CD4-positive, alpha-beta T cell (primary cell): ENCODE measurements at regions of chr5 and their contacts with region 1.

Region 1: DNA sequence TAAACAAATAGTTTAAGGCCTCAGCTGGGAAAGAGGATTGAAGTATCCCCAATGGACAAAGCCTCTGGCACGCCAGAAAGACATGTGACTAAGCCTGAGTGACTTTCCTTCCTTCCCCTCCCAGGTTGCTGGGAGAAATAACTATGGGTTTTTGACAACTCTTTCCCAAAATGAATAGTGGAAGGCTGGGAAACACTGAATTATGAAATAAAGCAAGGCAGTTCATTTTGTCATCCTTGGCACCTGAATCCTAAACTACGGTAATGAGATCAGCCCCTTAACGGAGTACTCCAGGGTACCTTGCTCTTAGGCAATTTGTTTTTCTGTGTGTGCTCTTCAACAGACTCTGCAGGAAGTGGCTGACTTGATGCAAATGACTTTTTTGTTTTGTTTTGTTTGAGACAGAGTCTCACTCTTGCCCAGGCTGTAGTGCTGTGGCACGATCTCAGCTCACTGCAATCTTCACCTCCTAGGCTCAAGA is 75.2 kb downstream of the LMNB1 start:
- DNase-seq: peak in 8 of 14 experiments; percentile 6 to 64 (median 44)
- ATAC-seq: peak; percentile 81
- H3K4me3 ChIP-seq: peak overlapping the region; percentile 1
- H3K4me3 Mint-ChIP-seq: peak overlapping the region; percentile 93
- H3K27ac ChIP-seq: peak overlapping the region; percentile 64 to 78
- H3K27ac Mint-ChIP-seq: peak overlapping the region; percentile 100
- H3K4me1 ChIP-seq: peaks cover 42% of the 10 kb centered on the region
- H3K4me1 Mint-ChIP-seq: peaks cover 64% of the 10 kb centered on the region
- H3K27me3 ChIP-seq: no peaks in the 10 kb centered on the region
- H3K27me3 Mint-ChIP-seq: no peaks in the 10 kb centered on the region
- CTCF ChIP-seq: no peak

Region 2: GRCh38 chr5:126808521-126808988 is 43.6 kb before region 1 on chr5:
- CTCF ChIA-PET with region 1: no interaction called
- POLR2A ChIA-PET with region 1: interaction called, 9 read pairs
- intact Hi-C with region 1: loop called in 1 of 2 experiments (anchors 5 kb)
- DNase-seq: peak in 3 of 14 experiments; percentile 42 to 52 (median 47)
- ATAC-seq: no peak
- H3K4me3 ChIP-seq: no peak overlapping the region
- H3K4me3 Mint-ChIP-seq: no peak overlapping the region
- H3K27ac ChIP-seq: no peak overlapping the region
- H3K27ac Mint-ChIP-seq: no peak overlapping the region
- H3K4me1 ChIP-seq: peaks cover 12% of the 10 kb centered on the region
- H3K4me1 Mint-ChIP-seq: peaks cover 32% of the 10 kb centered on the region
- H3K27me3 ChIP-seq: no peaks in the 10 kb centered on the region
- H3K27me3 Mint-ChIP-seq: no peaks in the 10 kb centered on the region
- CTCF ChIP-seq: peak; percentile 59

Region 3: DNA sequence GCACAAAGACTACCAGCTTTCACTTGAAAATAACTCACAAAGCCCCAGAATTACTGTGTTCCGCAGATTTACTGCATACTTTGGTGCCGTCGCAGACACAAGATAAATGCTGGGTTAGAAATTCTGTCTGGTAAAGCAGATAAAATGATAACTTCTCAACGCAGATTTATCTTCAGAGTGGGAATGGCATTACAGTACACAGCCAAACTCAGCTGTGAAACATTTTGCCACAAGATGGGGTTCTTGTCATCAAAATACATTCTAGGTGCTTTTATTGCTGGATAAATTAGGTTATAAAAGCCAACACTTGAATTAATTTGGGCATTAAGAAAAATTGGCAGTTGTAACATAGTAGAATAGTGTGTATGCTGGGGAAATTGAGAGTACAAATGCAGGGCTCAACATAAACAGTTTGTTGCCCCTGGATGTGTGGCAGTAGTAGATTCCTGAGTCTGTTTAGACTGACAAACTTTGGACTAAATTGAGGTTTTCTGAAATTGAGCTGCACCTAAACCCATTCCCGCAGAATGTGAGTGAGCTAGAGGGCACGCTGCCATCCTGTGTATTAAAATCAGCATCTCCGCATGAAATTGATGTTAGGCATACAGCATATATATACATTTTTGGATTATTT is 14.1 kb before region 1 on chr5:
- CTCF ChIA-PET with region 1: interaction called, 6 read pairs
- POLR2A ChIA-PET with region 1: interaction called, 7 read pairs
- intact Hi-C with region 1: loop called in 1 of 2 experiments (anchors 2 kb)
- DNase-seq: peak in 3 of 14 experiments; percentile 18 to 48 (median 44)
- ATAC-seq: peak; percentile 51
- H3K4me3 ChIP-seq: no peak overlapping the region
- H3K4me3 Mint-ChIP-seq: no peak overlapping the region
- H3K27ac ChIP-seq: no peak overlapping the region
- H3K27ac Mint-ChIP-seq: no peak overlapping the region
- H3K4me1 ChIP-seq: no peaks in the 10 kb centered on the region
- H3K4me1 Mint-ChIP-seq: no peaks in the 10 kb centered on the region
- H3K27me3 ChIP-seq: no peaks in the 10 kb centered on the region
- H3K27me3 Mint-ChIP-seq: no peaks in the 10 kb centered on the region
- CTCF ChIP-seq: peak; percentile 59

Region 4: DNA sequence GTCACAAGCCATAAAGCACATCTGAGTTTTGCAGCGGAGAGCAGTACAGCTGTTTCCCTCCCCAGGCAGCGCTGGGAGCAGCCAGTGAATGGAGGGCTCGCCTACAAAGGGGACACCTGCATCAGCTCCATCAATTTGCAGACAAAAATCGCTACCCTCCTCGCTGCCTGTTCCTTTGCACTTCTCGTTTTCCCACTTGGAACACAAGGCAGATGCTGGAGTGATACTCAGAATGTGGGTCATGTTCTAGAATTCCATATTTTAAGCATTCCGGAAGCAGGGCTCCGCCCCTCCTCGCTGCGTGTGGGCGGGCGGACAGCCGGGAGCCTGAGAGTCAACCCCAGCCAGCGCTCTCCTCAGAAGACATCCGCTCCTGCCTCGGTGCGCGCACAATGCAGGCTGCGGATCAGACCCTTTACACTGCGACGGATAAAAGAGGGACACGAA is 16.9 kb after region 1 on chr5:
- CTCF ChIA-PET with region 1: no interaction called
- POLR2A ChIA-PET with region 1: interaction called, 11 read pairs
- intact Hi-C with region 1: no loop called
- DNase-seq: peak in 8 of 14 experiments; percentile 20 to 60 (median 28)
- ATAC-seq: peak; percentile 84
- H3K4me3 ChIP-seq: peak overlapping the region; percentile 44
- H3K4me3 Mint-ChIP-seq: peak overlapping the region; percentile 72
- H3K27ac ChIP-seq: no peak overlapping the region
- H3K27ac Mint-ChIP-seq: no peak overlapping the region
- H3K4me1 ChIP-seq: peaks cover 8% of the 10 kb centered on the region
- H3K4me1 Mint-ChIP-seq: peaks cover 16% of the 10 kb centered on the region
- H3K27me3 ChIP-seq: no peaks in the 10 kb centered on the region
- H3K27me3 Mint-ChIP-seq: no peaks in the 10 kb centered on the region
- CTCF ChIP-seq: no peak

Region 5: DNA sequence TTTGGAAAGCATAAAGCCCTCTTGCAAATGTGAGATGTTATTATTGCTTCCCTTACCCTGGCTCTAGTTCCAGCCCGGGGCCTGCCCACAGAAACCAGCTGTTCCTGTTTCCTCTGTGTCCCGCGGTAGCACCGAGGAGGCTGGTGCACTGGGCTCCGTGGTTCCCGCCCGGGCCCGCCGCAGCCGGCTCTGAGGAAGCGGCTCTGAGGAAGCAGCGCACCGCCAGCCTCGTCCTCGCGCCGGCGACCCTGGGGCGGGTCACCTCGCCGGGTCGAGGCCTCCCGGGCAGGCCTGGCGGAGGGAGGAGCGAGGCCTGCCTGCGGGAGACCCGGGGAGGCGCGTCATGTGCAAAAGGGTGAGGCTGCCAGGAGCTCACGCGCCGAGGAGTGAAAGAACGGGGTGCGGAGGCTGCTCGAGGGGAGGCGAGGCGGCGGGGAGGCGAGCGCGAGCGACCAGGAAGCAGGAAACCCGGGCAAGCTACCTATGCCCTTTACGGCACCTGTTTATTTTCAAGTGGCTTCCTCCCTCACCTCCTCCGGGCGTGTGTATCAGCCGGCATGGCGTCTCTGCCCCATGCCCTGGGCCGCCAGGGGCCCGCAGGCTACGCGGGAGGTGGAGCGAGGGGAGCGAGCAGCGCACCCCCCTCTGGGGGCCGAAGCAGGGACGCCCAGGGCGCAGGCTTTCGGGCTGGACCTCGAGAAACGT is 377.2 kb after region 1 on chr5:
- CTCF ChIA-PET with region 1: no interaction called
- POLR2A ChIA-PET with region 1: interaction called, 4 read pairs
- intact Hi-C with region 1: loop called in 1 of 2 experiments (anchors 10 kb)
- DNase-seq: peak; percentile 25 to 72 (median 50)
- ATAC-seq: peak; percentile 84
- H3K4me3 ChIP-seq: peak overlapping the region; percentile 63
- H3K4me3 Mint-ChIP-seq: peak overlapping the region; percentile 87
- H3K27ac ChIP-seq: peak overlapping the region; percentile 62 to 63
- H3K27ac Mint-ChIP-seq: peak overlapping the region; percentile 55
- H3K4me1 ChIP-seq: peaks cover 16% of the 10 kb centered on the region
- H3K4me1 Mint-ChIP-seq: peaks cover 23% of the 10 kb centered on the region
- H3K27me3 ChIP-seq: no peaks in the 10 kb centered on the region
- H3K27me3 Mint-ChIP-seq: no peaks in the 10 kb centered on the region
- CTCF ChIP-seq: no peak

Region 6: GRCh38 chr5:127517480-127518318 is 665.6 kb after region 1 on chr5 and contains the start of gene PRRC1:
- CTCF ChIA-PET with region 1: no interaction called
- POLR2A ChIA-PET with region 1: no interaction called
- intact Hi-C with region 1: loop called in 1 of 2 experiments (anchors 10 kb)
- DNase-seq: peak; percentile 64 to 92 (median 76)
- ATAC-seq: peak; percentile 94
- H3K4me3 ChIP-seq: peak within 1 kb of the TSS; percentile 97
- H3K4me3 Mint-ChIP-seq: peak within 1 kb of the TSS; percentile 97
- H3K27ac ChIP-seq: peak within 1 kb of the TSS; percentile 68 to 76
- H3K27ac Mint-ChIP-seq: peak within 1 kb of the TSS; percentile 82
- H3K4me1 ChIP-seq: peaks cover 15% of the 10 kb centered on the region
- H3K4me1 Mint-ChIP-seq: peaks cover 44% of the 10 kb centered on the region
- H3K27me3 ChIP-seq: no peaks in the 10 kb centered on the region
- H3K27me3 Mint-ChIP-seq: peaks cover 6% of the 10 kb centered on the region
- CTCF ChIP-seq: no peak
- total RNA-seq, gene PRRC1: 32.0 to 33.8 TPM